ENCODE measurements at regions of chr11 and their contacts with region 1.

Region 1: GRCh38 chr11:87081358-87081757 is 43.6 kb downstream of the TMEM135 start:
- DNase-seq: no peak
- H3K4me3 Mint-ChIP-seq: peak overlapping the region; percentile 73
- H3K27ac Mint-ChIP-seq: peak overlapping the region; percentile 84
- H3K4me1 Mint-ChIP-seq: peaks cover 25% of the 10 kb centered on the region
- H3K27me3 Mint-ChIP-seq: no peaks in the 10 kb centered on the region

Region 2: DNA sequence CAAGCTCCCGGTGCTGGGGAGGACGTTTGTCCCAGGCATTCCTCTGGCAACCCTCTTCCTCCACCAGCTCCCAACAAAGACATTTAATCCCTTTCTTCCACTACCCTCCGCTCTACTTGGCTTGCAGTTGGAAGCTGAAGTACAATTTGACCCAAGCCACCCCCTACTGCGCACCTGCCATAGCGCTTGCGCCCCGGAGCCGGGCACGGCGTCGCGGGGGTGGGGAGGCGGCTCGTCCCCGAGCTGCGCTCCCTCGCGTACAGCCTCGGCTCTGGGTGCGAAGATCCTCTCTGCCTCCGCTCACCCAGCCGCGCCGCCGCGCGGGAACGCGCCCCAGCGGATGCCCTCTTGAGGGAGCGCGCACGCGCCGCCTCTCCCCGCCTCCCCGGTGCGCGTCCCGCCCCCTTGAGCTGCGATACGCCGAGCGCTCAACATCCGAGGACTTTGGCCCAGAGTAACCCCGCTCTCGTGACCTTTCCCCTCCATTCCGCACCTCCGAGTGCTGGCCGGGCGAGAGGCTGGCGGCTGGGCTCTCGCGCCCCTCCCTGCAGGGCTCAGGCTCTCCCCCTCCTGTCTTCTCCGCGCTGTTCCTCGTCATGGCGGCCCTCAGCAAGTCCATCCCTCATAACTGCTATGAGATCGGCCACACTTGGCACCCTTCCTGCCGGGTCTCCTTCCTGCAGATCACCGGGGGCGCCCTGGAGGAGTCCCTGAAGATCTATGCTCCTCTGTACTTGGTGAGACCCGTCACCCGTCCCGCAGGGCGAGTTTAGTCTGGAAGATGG is 43.7 kb before region 1 on chr11 and contains the start of gene TMEM135:
- CTCF ChIA-PET with region 1: interaction called, 8 read pairs
- POLR2A ChIA-PET with region 1: interaction called, 14 read pairs
- DNase-seq: peak; percentile 97
- H3K4me3 Mint-ChIP-seq: peak within 1 kb of the TSS; percentile 97
- H3K27ac Mint-ChIP-seq: peak within 1 kb of the TSS; percentile 81
- H3K4me1 Mint-ChIP-seq: peaks cover 49% of the 10 kb centered on the region
- H3K27me3 Mint-ChIP-seq: peaks cover 14% of the 10 kb centered on the region
- total RNA-seq, gene TMEM135: 38.3 to 46.9 TPM

Region 3: DNA sequence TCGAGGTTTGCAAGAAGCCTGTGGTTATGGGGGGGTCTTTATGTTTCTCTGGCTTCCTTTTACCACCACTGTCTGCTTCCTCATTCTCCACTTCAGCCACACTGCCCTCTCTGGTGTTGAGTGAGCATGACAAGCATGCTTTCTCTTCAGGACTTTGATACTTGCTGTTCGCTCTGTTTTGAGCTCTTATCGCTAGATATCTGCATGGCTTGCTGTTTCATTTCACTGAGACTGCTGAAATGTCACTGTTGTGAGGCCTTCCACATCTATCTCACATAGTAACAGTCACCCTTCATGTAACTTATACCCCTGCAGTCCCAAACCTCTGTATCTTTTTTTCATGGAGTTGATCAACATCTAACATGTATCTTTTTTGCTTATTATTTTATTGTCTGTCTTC is 16.2 kb after region 1 on chr11:
- CTCF ChIA-PET with region 1: interaction called, 23 read pairs
- POLR2A ChIA-PET with region 1: no interaction called
- DNase-seq: peak; percentile 35
- H3K4me3 Mint-ChIP-seq: no peak overlapping the region
- H3K27ac Mint-ChIP-seq: peak overlapping the region; percentile 3
- H3K4me1 Mint-ChIP-seq: peaks cover 8% of the 10 kb centered on the region
- H3K27me3 Mint-ChIP-seq: no peaks in the 10 kb centered on the region

Region 4: DNA sequence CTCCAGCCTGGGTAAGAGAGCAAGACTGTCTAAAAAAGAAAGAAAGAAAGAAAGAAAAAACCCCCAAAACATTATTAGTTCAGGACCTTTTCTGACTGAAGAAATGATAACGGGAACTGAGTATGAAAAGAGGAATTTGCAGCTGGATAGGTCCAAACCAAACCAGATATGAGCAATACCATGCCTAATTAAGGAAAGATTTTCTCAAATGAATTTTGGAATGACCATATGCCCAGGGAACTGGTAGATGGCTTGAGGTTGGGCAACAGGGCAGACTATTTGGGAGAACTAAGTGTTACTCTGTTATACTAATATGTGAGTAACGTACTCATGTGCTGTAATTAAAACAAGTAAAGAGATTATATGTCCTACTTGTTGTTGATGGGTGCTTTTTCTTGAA is 142.5 kb after region 1 on chr11:
- CTCF ChIA-PET with region 1: no interaction called
- POLR2A ChIA-PET with region 1: no interaction called
- DNase-seq: no peak
- H3K4me3 Mint-ChIP-seq: no peak overlapping the region
- H3K27ac Mint-ChIP-seq: no peak overlapping the region
- H3K4me1 Mint-ChIP-seq: peaks cover 3% of the 10 kb centered on the region
- H3K27me3 Mint-ChIP-seq: no peaks in the 10 kb centered on the region

Region 5: DNA sequence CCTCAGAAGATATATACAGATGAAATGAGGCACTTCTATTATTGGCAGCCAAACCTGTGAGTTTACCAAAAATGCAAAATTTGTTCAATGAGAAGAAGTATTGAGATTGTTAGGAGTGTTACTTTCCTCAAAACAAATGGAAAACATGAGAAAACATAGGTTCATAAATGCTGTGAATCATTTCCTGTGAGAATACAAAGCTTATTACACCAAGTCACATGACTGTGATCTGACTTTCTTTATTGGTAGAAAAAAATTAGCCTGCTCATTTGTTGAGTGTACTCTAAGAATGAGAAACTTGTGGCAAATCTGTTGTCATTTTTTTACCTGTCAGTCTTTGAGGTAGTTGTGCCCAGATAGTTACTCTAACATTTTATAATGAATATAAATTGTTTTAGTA is 171.5 kb after region 1 on chr11:
- CTCF ChIA-PET with region 1: no interaction called
- POLR2A ChIA-PET with region 1: no interaction called
- DNase-seq: no peak
- H3K4me3 Mint-ChIP-seq: no peak overlapping the region
- H3K27ac Mint-ChIP-seq: no peak overlapping the region
- H3K4me1 Mint-ChIP-seq: peaks cover 14% of the 10 kb centered on the region
- H3K27me3 Mint-ChIP-seq: no peaks in the 10 kb centered on the region

Measured in activated CD4-positive, alpha-beta memory T cell treated with anti-CD3 and anti-CD28 coated beads, Interleukin-2, amount 10 ng/mL, durations not matched to agents 7 days and 5 days (primary cell).